ENCODE measurements at regions of chr10 and their contacts with region 1.

Region 1: DNA sequence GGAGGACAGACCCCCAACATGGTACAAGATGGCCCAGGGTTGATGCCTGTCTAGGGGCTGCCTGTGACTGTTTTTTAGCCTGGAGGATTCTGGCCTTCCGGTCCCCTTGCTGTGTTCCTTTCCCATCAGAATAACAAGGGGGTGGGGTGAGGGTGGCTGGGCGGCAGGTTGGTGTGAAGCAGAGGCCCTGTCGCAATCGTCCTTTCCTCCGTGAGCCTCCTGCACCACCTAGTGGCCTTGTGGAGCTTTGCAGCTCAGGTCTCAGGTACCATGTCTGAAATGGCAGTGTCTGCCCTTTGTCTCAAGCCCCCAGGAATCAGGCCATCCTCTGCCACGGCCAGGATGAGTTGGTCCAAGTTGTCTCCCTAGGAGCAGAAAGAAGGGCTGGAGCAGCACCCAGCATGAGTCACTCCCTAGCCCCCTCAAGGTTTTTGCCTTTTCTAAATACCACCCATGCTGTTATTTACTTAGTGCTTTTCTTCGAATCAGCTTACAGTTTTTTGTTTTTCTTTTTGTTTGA is 24.2 kb downstream of the TACR2 start:
- DNase-seq: peak; percentile 92
- H3K4me3 Mint-ChIP-seq: no peak overlapping the region
- H3K27ac Mint-ChIP-seq: peak overlapping the region; percentile 76
- H3K4me1 Mint-ChIP-seq: peaks cover 23% of the 10 kb centered on the region
- H3K27me3 Mint-ChIP-seq: no peaks in the 10 kb centered on the region

Region 2: GRCh38 chr10:69232252-69232651 is 160.3 kb before region 1 on chr10:
- CTCF ChIA-PET with region 1: interaction called, 33 read pairs
- intact Hi-C with region 1: loop called (anchors 1 kb)
- DNase-seq: no peak
- H3K4me3 Mint-ChIP-seq: no peak overlapping the region
- H3K27ac Mint-ChIP-seq: no peak overlapping the region
- H3K4me1 Mint-ChIP-seq: peaks cover 42% of the 10 kb centered on the region
- H3K27me3 Mint-ChIP-seq: no peaks in the 10 kb centered on the region

Measured in activated naive CD4-positive, alpha-beta T cell treated with anti-CD3 and anti-CD28 coated beads for 36 hours (primary cell).